Common myeloid progenitor, CD34-positive (primary cell): ENCODE measurements at regions of chr12 and their contacts with region 1.

Region 1: GRCh38 chr12:47779301-47779942 is 6.4 kb downstream of the SLC48A1 start:
- DNase-seq: peak; percentile 83 to 94 (median 90)
- H3K4me3 ChIP-seq: no peak overlapping the region
- H3K27ac ChIP-seq: no peak overlapping the region
- H3K4me1 ChIP-seq: peaks cover 9 to 59% (median 54%) of the 10 kb centered on the region in 4 experiments
- H3K27me3 ChIP-seq: no peaks in the 10 kb centered on the region

Region 2: GRCh38 chr12:47686645-47687240 is 92.7 kb before region 1 on chr12:
- CTCF ChIA-PET with region 1: no interaction called
- POLR2A ChIA-PET with region 1: no interaction called
- DNase-seq: peak; percentile 49 to 76 (median 71)
- H3K4me3 ChIP-seq: no peak overlapping the region
- H3K27ac ChIP-seq: no peak overlapping the region
- H3K4me1 ChIP-seq: no peaks in the 10 kb centered on the region
- H3K27me3 ChIP-seq: no peaks in the 10 kb centered on the region

Region 3: DNA sequence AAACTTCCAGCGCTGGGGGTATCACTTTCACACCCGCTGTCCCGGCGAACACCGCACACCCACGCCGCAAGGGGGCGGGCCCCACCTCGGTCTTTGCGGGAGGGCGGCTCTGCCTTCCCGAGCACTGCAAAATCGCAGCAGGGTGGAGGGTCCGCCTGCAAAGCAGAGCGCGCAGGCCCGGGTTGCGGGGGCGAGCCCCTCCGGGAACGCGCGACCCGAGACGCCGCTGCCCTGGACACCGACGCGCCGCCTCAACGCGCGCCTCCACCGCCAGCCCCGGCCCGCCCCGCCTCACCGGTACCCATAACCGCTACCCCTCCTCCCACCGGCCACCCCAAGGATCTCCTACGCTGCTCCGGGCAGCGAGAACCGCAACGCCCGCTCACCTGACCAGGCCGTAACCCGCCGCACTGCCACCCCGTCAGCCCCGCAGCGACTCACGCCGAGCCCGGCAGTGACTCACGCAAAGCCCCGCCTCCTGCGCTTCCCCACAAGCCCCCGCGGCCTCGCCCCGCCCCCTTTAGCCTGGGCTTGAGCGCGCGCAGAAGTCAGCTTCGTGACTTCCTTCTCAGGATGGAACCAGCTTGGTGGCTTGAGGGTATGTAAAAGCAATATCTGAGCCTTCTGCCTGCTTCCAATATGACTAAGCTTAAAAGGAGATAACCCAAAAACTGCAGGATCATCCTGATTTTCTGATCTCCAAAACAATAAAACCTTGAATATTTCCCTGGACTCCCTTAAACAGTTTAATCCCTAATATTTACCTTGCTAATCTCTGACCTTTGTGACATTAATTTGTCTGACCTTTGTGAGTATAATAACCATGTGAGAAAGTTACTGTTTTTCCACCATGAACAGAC is 73.6 kb before region 1 on chr12 and contains the start of gene RPAP3:
- CTCF ChIA-PET with region 1: interaction called, 664 read pairs
- POLR2A ChIA-PET with region 1: no interaction called
- DNase-seq: peak; percentile 95 to 98 (median 98)
- H3K4me3 ChIP-seq: peak within 1 kb of the TSS; percentile 55 to 88 (median 80)
- H3K27ac ChIP-seq: peak within 1 kb of the TSS; percentile 77 to 91
- H3K4me1 ChIP-seq: peaks cover 36 to 56% (median 47%) of the 10 kb centered on the region in 4 experiments
- H3K27me3 ChIP-seq: no peaks in the 10 kb centered on the region

Region 4: DNA sequence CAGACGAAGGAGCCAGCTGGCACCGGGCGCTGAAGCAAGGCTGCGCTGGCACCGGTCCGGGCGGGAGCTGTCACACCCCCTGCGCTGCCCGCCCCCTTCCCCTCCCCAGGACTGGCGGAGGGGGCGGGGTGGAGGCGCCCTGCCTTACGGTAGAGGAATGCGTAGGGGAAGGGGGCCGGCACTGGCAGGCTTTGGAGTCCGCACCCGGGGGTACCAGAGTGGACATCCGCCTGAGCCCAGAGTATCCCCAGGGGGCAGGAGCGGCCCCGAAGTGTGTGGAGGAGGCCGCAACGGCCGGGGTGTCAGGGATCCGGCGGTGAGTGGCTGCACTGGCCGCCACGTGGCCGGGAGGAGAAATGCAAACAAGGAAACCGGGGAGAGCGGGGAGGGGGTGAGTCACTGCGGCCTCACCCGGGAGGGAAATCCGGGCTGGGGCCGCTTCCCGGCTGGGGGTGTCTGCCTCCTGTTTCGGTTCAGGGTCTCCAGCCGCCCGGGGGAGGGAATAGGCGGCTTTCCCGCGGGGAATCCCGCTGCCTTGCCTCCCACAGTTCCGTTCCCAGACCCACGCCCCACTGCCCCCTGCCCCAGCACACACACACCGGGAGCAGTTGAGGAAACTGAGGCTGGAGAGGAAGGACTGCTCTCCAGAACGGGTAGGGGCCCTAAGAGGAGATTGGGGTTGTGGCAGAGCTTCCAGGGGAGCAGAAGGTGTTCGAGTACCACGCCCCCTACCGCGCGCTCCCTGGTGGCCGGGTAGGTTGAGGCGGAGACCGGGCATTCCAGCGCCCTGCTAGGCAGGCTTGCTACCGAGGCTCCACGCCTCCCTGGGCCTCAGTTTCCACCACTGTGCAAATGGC is 20.4 kb before region 1 on chr12 and contains the start of gene RAPGEF3:
- CTCF ChIA-PET with region 1: interaction called, 1,109 read pairs
- POLR2A ChIA-PET with region 1: interaction called, 6 read pairs
- DNase-seq: peak; percentile 79 to 84 (median 82)
- H3K4me3 ChIP-seq: peak within 1 kb of the TSS; percentile 25 to 90 (median 69)
- H3K27ac ChIP-seq: peak within 1 kb of the TSS; percentile 50 to 84
- H3K4me1 ChIP-seq: peaks cover 0 to 53% (median 36%) of the 10 kb centered on the region in 4 experiments
- H3K27me3 ChIP-seq: no peaks in the 10 kb centered on the region

Region 5: GRCh38 chr12:47767216-47767724 is 12.2 kb before region 1 on chr12:
- CTCF ChIA-PET with region 1: interaction called, 1,109 read pairs
- POLR2A ChIA-PET with region 1: interaction called, 3 read pairs
- DNase-seq: peak; percentile 75 to 86 (median 80)
- H3K4me3 ChIP-seq: no peak overlapping the region
- H3K27ac ChIP-seq: no peak overlapping the region
- H3K4me1 ChIP-seq: peaks cover 4 to 44% (median 26%) of the 10 kb centered on the region in 4 experiments
- H3K27me3 ChIP-seq: no peaks in the 10 kb centered on the region

Region 6: GRCh38 chr12:47812797-47813510 is 33.5 kb after region 1 on chr12:
- CTCF ChIA-PET with region 1: interaction called, 22 read pairs
- POLR2A ChIA-PET with region 1: interaction called, 4 read pairs
- DNase-seq: peak; percentile 91 to 98 (median 97)
- H3K4me3 ChIP-seq: peak overlapping the region in 6 of 7 experiments; percentile 35 to 74 (median 58)
- H3K27ac ChIP-seq: peak overlapping the region; percentile 59 to 88
- H3K4me1 ChIP-seq: peaks cover 45 to 98% (median 97%) of the 10 kb centered on the region in 4 experiments
- H3K27me3 ChIP-seq: no peaks in the 10 kb centered on the region